A549 (cell line): ENCODE measurements at regions of chr17 and their contacts with region 1.

Region 1: GRCh38 chr17:74873038-74873873 is 462 bp upstream of the FDXR start:
- DNase-seq: peak; percentile 100
- ATAC-seq: peak; percentile 92 to 96
- H3K4me3 ChIP-seq: peak overlapping the region; percentile 69
- H3K27ac ChIP-seq: peak overlapping the region; percentile 91 to 94
- H3K4me1 ChIP-seq: peaks cover 22% of the 10 kb centered on the region
- CTCF ChIP-seq: no peak
- EP300 ChIP-seq: no peak
- POLR2A ChIP-seq: peak; percentile 96
- RAD21 ChIP-seq: no peak

Region 2: DNA sequence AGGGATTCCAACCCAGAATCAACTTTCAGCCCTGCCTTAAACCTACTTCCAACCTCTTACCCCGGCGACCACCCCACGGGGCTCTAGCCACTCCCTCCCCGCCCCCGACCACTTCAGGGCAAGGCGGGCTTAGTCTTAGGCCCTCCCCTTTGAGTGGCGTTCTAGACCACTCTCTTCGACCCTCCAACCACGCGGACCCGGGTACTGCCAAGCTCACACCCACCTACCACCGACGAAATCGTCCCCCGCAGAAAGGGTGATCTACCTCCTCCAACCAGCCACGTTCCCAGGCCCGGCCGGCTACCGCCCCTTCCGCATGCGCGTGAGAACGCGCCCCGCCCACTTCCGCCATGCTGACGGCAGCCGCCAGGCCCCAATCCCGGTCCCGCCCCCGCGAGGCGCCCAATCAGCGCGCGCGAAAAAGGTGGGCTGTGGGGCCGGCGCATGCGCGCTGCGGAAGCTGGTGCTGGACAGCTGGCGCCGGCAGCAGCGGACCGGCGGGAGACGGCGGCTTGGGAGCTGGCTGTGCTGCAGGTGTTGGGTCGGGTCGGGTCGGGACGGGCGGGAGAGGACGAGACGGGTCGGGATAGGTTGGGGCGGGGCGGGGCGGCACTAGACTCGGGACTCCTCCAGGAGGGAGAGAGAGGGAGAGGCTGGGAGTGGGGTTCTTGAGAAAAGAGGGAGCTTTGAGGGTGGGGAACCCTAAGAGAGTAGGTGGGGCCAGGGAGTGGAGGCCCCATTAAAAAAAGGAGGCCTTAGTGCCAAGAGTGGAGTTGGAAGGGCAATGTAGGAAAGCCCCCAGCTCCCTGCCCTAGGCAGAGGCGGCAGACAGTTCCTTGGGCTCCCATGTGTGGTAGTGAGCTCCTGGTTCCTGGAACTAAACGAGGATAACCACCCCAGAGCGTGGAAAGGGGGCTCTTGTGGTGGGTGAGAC is 96.9 kb before region 1 on chr17 and contains the start of gene NAT9:
- CTCF ChIA-PET with region 1: interaction called, 1,302 read pairs
- POLR2A ChIA-PET with region 1: interaction called, 11 read pairs
- DNase-seq: peak; percentile 97 to 99
- ATAC-seq: peak; percentile 84 to 92
- H3K4me3 ChIP-seq: peak within 1 kb of the TSS; percentile 69
- H3K27ac ChIP-seq: peak within 1 kb of the TSS; percentile 89 to 92
- H3K4me1 ChIP-seq: peaks cover 31% of the 10 kb centered on the region
- CTCF ChIP-seq: no peak
- EP300 ChIP-seq: no peak
- POLR2A ChIP-seq: peak; percentile 91
- RAD21 ChIP-seq: no peak
- polyA plus RNA-seq, gene NAT9: 42.9 and 43.4 TPM in 2 replicates

Region 3: DNA sequence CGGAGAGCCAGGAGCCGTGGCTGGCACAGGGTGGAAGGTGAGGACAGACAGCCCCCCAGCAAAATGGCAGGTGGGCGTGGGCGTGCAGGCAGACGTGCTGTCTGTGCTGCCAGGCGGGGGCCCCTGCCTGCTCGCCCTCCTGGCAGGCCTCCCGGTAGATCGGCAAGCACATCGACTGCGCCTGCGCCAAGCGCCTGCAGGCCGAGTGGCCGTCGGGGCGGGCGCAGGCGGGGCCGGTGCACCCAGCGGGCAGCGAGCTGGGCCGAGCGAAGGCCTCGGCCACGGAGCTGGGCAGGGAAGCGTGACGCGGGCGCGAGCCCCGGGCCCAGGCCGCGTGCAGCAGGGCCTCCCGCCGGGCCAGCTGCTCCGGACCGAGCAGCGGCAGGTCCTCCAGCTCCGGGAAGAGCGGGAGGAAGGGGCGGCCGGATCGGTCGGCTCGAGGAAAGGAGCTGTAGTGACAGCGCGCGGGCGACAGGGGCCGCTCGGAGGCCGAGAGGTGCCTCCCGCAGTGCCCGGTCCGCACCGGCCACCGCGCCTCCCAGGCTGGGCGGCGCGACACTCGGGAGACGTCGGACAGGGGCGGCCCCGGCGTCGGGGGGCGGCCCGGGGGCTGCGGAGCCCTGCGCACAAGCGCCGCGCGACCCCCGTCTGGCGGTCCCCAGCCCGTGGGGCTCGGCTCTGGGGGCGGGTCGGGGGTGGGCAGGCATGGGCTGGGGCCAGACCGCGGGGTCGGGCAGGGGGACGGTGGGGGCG is 30.5 kb before region 1 on chr17:
- CTCF ChIA-PET with region 1: interaction called, 851 read pairs
- POLR2A ChIA-PET with region 1: interaction called, 24 read pairs
- DNase-seq: peak; percentile 82 to 96
- ATAC-seq: peak; percentile 79 to 89
- H3K4me3 ChIP-seq: peak overlapping the region; percentile 50
- H3K27ac ChIP-seq: peak overlapping the region; percentile 82 to 89
- H3K4me1 ChIP-seq: peaks cover 4% of the 10 kb centered on the region; the same call in 1 of the 3 replicates
- CTCF ChIP-seq: peak; percentile 63
- EP300 ChIP-seq: no peak
- POLR2A ChIP-seq: peak; percentile 77
- RAD21 ChIP-seq: peak; percentile 41 to 61; a peak in 4 of 5 replicates

Region 4: DNA sequence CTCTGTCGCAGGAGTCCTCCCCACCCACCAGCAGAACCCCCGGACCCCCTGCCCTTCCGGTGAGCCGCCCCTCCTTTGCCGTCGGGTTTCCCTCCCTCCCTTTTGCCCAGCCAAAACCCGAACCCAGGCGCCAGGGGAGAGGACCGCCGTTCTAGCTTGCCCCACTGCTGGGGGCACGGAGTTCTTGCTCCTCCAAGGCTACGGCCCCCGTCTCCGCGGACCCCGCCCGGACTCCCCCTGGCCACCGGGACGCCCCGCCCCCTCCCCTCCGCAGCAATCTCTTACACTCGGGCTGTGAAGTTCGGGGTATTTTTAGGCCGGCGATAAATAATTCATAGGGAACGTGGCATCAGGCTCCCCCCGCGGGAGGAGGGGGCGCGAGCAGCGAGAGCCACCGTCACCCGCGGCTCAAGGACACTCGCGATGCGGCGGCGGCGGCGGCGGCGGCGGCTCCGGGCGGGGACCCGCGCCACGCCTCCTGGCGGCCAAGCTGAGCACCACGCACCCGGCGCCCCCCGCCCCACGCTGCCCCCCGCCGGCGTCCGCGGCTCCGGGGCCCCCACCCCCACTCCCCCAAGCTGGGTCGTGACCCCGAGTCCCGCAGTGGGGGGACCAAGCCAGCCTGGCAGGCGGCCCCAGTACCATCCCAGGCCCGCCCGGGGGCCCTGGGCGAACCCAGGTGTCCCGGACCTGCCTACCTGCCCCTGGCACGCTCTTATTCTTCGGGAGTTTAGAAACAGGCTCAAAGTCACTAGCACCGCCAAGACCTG is 13.6 kb before region 1 on chr17 and contains the start of gene GRIN2C:
- CTCF ChIA-PET with region 1: interaction called, 851 read pairs
- POLR2A ChIA-PET with region 1: interaction called, 43 read pairs
- DNase-seq: no peak
- ATAC-seq: peak in 1 of 2 experiments; percentile 18; a peak in 3 of 6 replicates
- H3K4me3 ChIP-seq: peak within 1 kb of the TSS; percentile 39
- H3K27ac ChIP-seq: peak within 1 kb of the TSS in 1 of 2 experiments; percentile 24; a peak in 2 of 6 replicates
- H3K4me1 ChIP-seq: peaks cover 40% of the 10 kb centered on the region
- CTCF ChIP-seq: peak; percentile 82
- EP300 ChIP-seq: no peak
- POLR2A ChIP-seq: no peak
- RAD21 ChIP-seq: peak in 1 of 2 experiments; percentile 45; a peak in 3 of 5 replicates
- polyA plus RNA-seq, gene GRIN2C: 0.15 and 0.17 TPM in 2 replicates

Region 5: DNA sequence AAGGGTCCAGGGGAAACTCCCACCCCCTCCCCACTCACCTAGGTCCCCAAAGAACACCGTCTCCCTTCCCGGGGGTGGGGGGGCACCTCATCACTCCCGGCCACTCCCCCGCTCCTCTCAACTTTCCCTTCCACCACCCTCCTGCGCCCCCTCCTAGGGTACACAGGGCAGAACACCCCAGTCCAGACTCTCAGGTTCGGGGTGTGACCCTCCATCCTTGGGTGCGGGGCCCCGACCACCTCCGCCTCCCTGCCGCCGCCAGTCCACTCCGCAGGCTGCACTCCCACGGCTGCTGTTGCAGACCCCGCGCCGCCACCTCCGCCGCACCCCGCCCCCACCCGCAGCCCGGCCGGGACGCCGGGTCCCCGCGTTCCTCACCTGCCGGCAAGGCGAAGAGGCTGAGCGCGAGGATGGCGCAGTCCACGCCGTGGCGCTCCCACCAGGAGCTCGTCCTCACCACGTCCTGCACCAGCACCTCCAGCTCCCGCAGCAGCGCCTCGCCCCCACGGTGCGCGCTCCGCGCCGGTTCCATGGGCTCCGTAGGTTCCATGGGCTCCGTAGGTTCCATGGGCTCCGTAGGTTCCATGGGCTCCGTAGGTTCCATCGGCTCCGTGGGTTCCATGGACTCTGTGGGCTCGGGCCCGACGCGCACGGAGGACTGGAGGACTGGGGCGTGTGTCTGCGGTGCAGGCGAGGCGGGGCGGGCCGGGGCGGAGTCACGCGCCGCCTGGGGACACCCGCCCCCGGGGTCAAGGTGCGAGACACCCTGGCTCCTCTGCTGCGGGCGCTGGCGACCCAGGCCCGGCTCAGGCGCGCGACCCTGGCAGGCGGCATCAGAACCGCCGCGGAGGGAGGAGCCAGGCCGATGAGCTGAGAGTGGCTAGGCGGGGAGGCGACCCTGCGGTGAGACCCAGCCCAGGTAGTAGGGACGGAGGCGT is 20.0 kb after region 1 on chr17 and contains the start of gene FADS6:
- CTCF ChIA-PET with region 1: interaction called, 7 read pairs
- POLR2A ChIA-PET with region 1: interaction called, 20 read pairs
- DNase-seq: no peak
- ATAC-seq: peak; percentile 32 to 65; a peak in 4 of 6 replicates
- H3K4me3 ChIP-seq: peak within 1 kb of the TSS; percentile 40
- H3K27ac ChIP-seq: peak within 1 kb of the TSS; percentile 30 to 59; a peak in 4 of 6 replicates
- H3K4me1 ChIP-seq: peaks cover 4% of the 10 kb centered on the region; the same call in 1 of the 3 replicates
- CTCF ChIP-seq: no peak
- EP300 ChIP-seq: no peak
- POLR2A ChIP-seq: no peak
- RAD21 ChIP-seq: no peak
- polyA plus RNA-seq, gene FADS6: not detected in 2 replicates

Region 6: GRCh38 chr17:74898376-74898946 is 25.2 kb after region 1 on chr17:
- CTCF ChIA-PET with region 1: interaction called, 3 read pairs
- POLR2A ChIA-PET with region 1: interaction called, 10 read pairs
- DNase-seq: no peak
- ATAC-seq: no peak
- H3K4me3 ChIP-seq: no peak overlapping the region
- H3K27ac ChIP-seq: no peak overlapping the region
- H3K4me1 ChIP-seq: peaks cover under 1% of the 10 kb centered on the region; the same call in 1 of the 3 replicates
- CTCF ChIP-seq: no peak
- EP300 ChIP-seq: no peak
- POLR2A ChIP-seq: no peak
- RAD21 ChIP-seq: no peak